HepG2 (cell line): ENCODE measurements at regions of chr12 and their contacts with region 1.

Region 1: DNA sequence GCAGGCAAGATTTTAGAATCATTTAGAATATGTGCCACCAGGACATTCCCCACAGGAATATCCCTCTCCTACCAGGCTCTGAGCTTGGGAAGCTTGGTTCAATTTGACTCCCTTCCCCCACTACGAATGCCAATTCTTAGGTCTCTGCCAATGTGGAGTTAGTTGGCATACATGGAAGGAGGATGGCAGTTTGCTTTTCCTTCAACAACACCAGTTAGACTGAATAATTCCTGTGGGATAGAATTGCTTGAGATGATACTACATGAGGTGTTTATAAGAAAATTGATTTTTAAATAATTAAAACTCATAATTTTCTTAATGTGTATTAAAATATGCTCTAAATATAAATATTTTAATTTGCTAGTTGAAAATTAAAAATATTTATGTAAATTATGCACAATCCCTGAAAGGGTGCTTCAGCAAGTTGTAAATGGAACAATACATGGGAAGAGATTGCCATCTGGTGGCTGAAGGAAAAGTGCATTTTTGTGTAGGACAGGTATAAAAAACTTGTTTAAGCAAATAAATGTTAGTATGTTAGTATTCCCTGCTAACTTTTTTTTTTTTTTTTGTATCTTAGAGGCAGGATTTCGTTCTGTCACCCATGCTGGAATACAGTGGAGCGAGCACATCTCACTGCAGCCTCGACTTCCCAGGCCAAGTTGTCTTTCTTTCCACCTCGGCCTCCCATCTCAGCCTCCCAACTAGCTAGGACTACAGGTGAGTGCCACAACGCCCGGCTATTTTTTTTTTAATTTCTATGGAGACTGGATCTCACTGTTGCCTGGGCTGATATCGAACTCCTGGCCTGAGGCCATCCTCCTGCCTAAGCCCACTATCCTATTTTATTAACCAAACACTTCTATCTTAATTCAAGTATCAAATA is 25.8 kb upstream of the STRAP start:
- DNase-seq: peak; percentile 63
- ATAC-seq: peak; percentile 62
- H3K4me3 ChIP-seq: no peak overlapping the region
- H3K27ac ChIP-seq: no peak overlapping the region
- H3K4me1 ChIP-seq: peaks cover 12% of the 10 kb centered on the region
- H3K27me3 ChIP-seq: no peaks in the 10 kb centered on the region
- CTCF ChIP-seq: peak; percentile 76
- EP300 ChIP-seq: no peak
- POLR2A ChIP-seq: no peak
- RAD21 ChIP-seq: peak; percentile 74

Region 2: DNA sequence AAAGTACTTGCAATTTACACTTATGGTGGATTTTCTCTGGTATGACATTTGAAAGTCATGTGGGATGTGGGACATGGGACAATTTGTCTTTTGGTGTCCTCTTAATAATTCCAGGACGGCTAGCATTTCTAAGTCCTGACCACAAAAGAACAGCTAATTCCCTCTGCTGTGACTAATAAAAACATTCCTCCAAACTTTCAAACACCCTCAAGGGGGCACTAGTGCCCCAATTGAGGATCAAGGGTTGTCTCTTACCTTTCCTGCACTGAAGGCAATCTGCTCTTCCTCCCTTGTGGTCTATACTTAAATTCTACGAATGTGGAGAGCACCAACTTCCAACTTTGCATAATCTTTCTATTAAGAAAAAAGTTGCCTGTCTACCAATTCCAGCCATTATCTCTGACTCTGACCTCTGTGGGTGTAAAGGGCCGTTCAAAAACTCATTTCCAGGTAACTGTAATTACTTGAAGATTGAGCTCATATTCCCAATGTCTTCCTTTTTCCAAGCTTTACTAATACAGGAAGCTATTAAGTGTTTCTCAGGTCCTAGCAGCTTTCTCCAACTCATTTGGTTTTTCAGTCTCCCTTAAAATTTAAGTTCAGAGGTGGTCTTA is 323.9 kb before region 1 on chr12:
- CTCF ChIA-PET with region 1: interaction called, 17 read pairs
- POLR2A ChIA-PET with region 1: no interaction called
- in situ Hi-C with region 1: loop called (anchors 5 kb)
- intact Hi-C with region 1: loop called (anchors 1 kb)
- DNase-seq: peak; percentile 55
- ATAC-seq: peak; percentile 88
- H3K4me3 ChIP-seq: no peak overlapping the region
- H3K27ac ChIP-seq: no peak overlapping the region
- H3K4me1 ChIP-seq: peaks cover 15% of the 10 kb centered on the region; the same call in 1 of the 2 replicates
- H3K27me3 ChIP-seq: peaks cover 0 to 6% of the 10 kb centered on the region in 2 experiments; a peak in 1 of 5 replicates
- CTCF ChIP-seq: peak; percentile 74
- EP300 ChIP-seq: no peak
- POLR2A ChIP-seq: no peak
- RAD21 ChIP-seq: 0 out of 2 replicates have a peak, but pooled peaks have one; percentile 21

Region 3: GRCh38 chr12:15590180-15590826 is 266.0 kb before region 1 on chr12:
- CTCF ChIA-PET with region 1: interaction called, 84 read pairs
- POLR2A ChIA-PET with region 1: no interaction called
- in situ Hi-C with region 1: loop called (anchors 5 kb)
- intact Hi-C with region 1: loop called (anchors 1 kb)
- DNase-seq: peak; percentile 70
- ATAC-seq: peak; percentile 92
- H3K4me3 ChIP-seq: peak overlapping the region; percentile 35 to 73 (median 57); a peak in 5 of 6 replicates
- H3K27ac ChIP-seq: no peak overlapping the region
- H3K4me1 ChIP-seq: peaks cover 24% of the 10 kb centered on the region
- H3K27me3 ChIP-seq: no peaks in the 10 kb centered on the region; a peak in 1 of 5 replicates
- CTCF ChIP-seq: peak; percentile 89
- EP300 ChIP-seq: no peak
- POLR2A ChIP-seq: no peak
- RAD21 ChIP-seq: peak; percentile 85

Region 4: DNA sequence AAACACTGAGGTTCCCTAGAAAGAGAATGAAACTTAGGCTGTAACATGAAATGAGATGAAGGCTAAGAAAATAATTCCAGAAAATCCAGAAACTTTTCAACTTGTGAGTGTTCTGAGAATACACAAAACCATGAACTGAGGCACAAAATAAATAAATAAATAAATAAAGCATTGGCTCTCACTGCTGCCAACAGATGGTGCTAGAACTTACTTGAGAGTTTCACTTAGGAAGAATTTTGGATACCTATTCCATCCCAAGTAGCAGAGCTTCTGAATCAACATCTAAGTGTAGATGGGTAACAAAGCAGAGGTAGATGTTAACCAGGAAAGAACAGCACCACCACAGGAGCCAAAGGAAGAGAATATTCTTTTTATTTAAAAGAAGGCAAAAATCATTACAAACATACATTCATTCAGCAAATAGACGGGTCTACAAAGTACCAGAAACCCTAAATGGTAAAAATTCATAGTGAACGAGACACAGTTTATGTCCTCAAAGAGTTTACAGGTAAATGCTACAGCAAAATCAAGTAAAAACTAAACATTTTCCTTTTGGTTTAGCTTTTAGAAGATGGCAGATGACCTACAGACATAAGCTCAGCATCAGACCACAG is 83.8 kb before region 1 on chr12:
- CTCF ChIA-PET with region 1: interaction called, 14 read pairs
- POLR2A ChIA-PET with region 1: no interaction called
- in situ Hi-C with region 1: no loop called
- intact Hi-C with region 1: no loop called
- DNase-seq: peak; percentile 19
- ATAC-seq: no peak
- H3K4me3 ChIP-seq: no peak overlapping the region
- H3K27ac ChIP-seq: no peak overlapping the region
- H3K4me1 ChIP-seq: peaks cover 22% of the 10 kb centered on the region
- H3K27me3 ChIP-seq: no peaks in the 10 kb centered on the region
- CTCF ChIP-seq: peak; percentile 42
- EP300 ChIP-seq: no peak
- POLR2A ChIP-seq: no peak
- RAD21 ChIP-seq: no peak

Region 5: DNA sequence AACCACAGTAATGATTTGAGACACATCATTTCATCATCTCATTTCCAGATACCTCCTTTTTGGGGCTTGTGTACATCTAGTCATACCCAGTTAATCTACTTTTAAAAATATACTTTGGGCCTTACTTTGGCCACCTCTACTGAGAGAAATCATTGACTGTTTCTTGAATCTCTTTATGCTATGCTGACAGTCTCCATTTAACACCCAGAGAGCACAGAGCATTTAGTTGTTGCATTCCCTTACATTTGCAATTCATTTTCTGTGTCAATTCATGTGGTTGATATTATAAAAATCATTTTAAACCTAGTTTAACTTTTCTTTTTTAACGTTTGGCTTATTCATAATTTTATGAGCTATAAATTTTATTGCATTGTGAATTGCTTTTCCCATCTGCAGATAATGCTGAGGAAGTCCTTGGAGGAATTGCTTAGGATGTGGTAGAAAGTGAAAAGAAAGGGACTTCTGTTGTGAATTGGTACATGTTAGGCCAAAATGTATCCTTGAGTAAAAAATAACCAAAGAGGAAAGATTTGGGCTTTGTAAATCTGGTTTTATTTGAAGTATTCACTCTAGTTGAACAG is 438.1 kb after region 1 on chr12:
- CTCF ChIA-PET with region 1: no interaction called
- POLR2A ChIA-PET with region 1: no interaction called
- in situ Hi-C with region 1: no loop called
- intact Hi-C with region 1: no loop called
- DNase-seq: no peak
- ATAC-seq: no peak
- H3K4me3 ChIP-seq: no peak overlapping the region
- H3K27ac ChIP-seq: no peak overlapping the region
- H3K4me1 ChIP-seq: no peaks in the 10 kb centered on the region
- H3K27me3 ChIP-seq: no peaks in the 10 kb centered on the region; a peak in 1 of 5 replicates
- CTCF ChIP-seq: no peak
- EP300 ChIP-seq: no peak
- POLR2A ChIP-seq: no peak
- RAD21 ChIP-seq: no peak